Activated CD4-positive, alpha-beta T cell treated with anti-CD3 and anti-CD28 coated beads for 36 hours (primary cell): ENCODE measurements at regions of chr11 and their contacts with region 1.

Region 1: GRCh38 chr11:124586238-124586860 is 16.6 kb downstream of the OR8A1 start:
- DNase-seq: peak; percentile 71
- ATAC-seq: no peak
- H3K4me3 Mint-ChIP-seq: no peak overlapping the region
- H3K27ac Mint-ChIP-seq: no peak overlapping the region
- H3K4me1 Mint-ChIP-seq: no peaks in the 10 kb centered on the region
- H3K27me3 Mint-ChIP-seq: peaks cover 11% of the 10 kb centered on the region

Region 2: DNA sequence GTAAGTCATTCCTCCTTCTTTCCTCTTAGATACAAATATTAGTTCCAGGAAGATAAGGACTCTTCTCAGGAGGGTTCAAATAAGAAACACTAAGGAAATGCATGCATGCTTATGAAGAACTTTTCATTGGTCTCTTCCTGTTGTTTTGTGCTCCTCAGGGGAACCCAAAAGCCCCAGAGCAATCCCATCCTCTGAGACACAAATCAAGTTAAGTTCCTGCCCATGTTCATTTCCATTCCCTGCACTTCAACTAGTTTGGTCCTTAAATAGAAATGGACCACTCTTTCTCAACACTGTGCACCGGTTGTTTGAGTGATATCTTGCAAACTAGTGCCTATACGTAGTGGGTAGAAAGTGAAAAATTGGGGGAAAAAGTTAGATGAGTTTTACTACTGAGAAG is 573.7 kb before region 1 on chr11 and contains the start of gene OR10G4:
- CTCF ChIA-PET with region 1: no interaction called
- POLR2A ChIA-PET with region 1: no interaction called
- intact Hi-C with region 1: no loop called
- DNase-seq: no peak
- ATAC-seq: no peak
- H3K4me3 Mint-ChIP-seq: no peak within 1 kb of the TSS
- H3K27ac Mint-ChIP-seq: no peak within 1 kb of the TSS
- H3K4me1 Mint-ChIP-seq: no peaks in the 10 kb centered on the region
- H3K27me3 Mint-ChIP-seq: no peaks in the 10 kb centered on the region
- total RNA-seq, gene OR10G4: not detected

Region 3: GRCh38 chr11:124402326-124402922 is 183.9 kb before region 1 on chr11:
- CTCF ChIA-PET with region 1: interaction called, 17 read pairs
- POLR2A ChIA-PET with region 1: no interaction called
- intact Hi-C with region 1: loop called (anchors 1 to 5 kb)
- DNase-seq: peak; percentile 82
- ATAC-seq: peak; percentile 93
- H3K4me3 Mint-ChIP-seq: no peak overlapping the region
- H3K27ac Mint-ChIP-seq: no peak overlapping the region
- H3K4me1 Mint-ChIP-seq: peaks cover 2% of the 10 kb centered on the region
- H3K27me3 Mint-ChIP-seq: peaks cover 4% of the 10 kb centered on the region

Region 4: GRCh38 chr11:124415356-124415923 is 170.9 kb before region 1 on chr11:
- CTCF ChIA-PET with region 1: interaction called, 28 read pairs
- POLR2A ChIA-PET with region 1: no interaction called
- intact Hi-C with region 1: loop called (anchors 1 kb)
- DNase-seq: no peak
- ATAC-seq: no peak
- H3K4me3 Mint-ChIP-seq: no peak overlapping the region
- H3K27ac Mint-ChIP-seq: no peak overlapping the region
- H3K4me1 Mint-ChIP-seq: no peaks in the 10 kb centered on the region
- H3K27me3 Mint-ChIP-seq: peaks cover 8% of the 10 kb centered on the region